Activated CD8-positive, alpha-beta T cell treated with anti-CD3 and anti-CD28 coated beads, Interleukin-2, amount 10 ng/mL, durations not matched to agents 7 days and 5 days (primary cell): ENCODE measurements at regions of chr3 and their contacts with region 1.

Region 1: DNA sequence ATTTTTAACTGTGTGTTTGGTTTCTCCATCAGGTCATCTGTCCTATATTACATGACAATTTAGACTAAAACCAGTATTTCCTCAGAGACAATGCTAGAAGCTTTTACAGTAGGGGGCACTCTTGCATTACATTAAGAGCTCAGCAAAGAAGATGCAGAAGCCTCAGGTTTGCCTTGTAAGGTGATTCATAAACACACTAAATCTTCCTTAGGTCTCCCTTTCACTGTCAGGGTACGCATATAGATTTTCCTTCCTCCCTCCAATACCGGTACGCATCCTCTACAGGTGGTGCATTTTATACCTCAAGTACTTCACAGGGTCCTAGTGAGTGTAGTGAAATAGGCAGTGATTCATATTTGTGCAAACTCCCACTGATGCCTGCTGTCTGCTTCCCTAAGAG is 46.5 kb downstream of the CD86 start:
- DNase-seq: peak; percentile 50
- ATAC-seq: peak; percentile 76
- H3K4me3 Mint-ChIP-seq: no peak overlapping the region
- H3K27ac Mint-ChIP-seq: no peak overlapping the region
- H3K4me1 Mint-ChIP-seq: peaks cover 22% of the 10 kb centered on the region
- H3K27me3 Mint-ChIP-seq: no peaks in the 10 kb centered on the region

Region 2: GRCh38 chr3:122111974-122112373 is 10.3 kb after region 1 on chr3:
- CTCF ChIA-PET with region 1: interaction called, 22 read pairs
- POLR2A ChIA-PET with region 1: no interaction called
- DNase-seq: no peak
- ATAC-seq: no peak
- H3K4me3 Mint-ChIP-seq: no peak overlapping the region
- H3K27ac Mint-ChIP-seq: no peak overlapping the region
- H3K4me1 Mint-ChIP-seq: no peaks in the 10 kb centered on the region
- H3K27me3 Mint-ChIP-seq: peaks cover 13% of the 10 kb centered on the region

Region 3: DNA sequence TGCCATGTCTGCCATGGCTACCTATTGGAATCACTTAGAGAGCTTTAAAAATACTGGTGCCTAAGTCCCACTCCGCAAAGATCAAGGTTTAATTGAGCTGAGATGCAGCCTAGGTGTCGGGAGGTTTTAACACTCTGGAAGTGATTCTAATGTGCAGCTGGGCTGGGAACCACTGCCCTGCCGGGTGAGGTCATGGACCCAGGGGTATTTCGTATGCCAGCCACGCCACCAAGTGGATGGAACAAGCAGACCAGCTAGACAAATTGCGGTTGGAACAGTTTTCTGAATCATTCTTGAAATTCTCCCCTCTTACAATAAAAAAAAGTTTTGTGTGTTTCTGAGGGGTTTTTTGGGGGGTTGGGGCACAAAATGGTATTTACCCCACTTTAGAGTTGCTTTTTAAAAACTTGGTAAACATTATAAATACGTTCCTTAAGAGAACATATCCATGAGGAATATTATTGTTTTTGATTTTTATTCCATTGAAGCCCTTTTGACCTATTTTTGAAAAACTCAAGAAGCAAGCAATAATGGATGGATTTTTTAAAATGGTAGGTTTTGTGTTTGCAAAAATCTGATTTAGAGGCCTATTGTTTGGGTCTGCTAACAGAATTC is 157.2 kb after region 1 on chr3:
- CTCF ChIA-PET with region 1: interaction called, 40 read pairs
- POLR2A ChIA-PET with region 1: no interaction called
- DNase-seq: peak; percentile 63
- ATAC-seq: peak; percentile 90
- H3K4me3 Mint-ChIP-seq: no peak overlapping the region
- H3K27ac Mint-ChIP-seq: no peak overlapping the region
- H3K4me1 Mint-ChIP-seq: peaks cover 6% of the 10 kb centered on the region
- H3K27me3 Mint-ChIP-seq: peaks cover 23% of the 10 kb centered on the region

Region 4: DNA sequence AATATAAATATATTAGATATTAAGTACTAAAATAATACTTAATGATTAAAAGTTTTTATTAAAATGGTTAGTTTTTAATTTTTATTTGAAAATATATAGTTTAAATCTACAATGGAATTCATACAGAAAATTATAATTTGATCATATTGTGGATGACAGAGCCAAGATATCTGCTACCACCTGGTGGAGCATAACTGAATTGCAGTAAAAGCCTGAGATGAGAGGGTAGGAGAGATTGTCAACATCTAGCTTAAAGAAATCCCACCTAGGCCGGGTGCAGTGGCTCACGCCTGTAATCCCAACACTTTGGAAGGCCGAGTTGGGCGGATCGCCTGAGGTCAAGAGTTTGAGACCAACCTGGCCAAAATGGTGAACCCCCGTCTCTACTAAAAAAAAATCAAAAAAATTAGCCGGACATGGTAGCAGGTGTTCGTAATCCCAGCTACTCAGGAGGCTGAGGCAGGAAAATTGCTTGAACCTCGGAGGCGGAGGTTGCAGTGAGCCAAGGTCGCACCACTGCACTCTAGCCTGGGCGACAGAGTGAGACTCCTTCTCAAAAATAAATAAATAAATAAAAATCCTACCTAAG is 198.3 kb after region 1 on chr3:
- CTCF ChIA-PET with region 1: interaction called, 56 read pairs
- POLR2A ChIA-PET with region 1: no interaction called
- DNase-seq: peak; percentile 69
- ATAC-seq: no peak
- H3K4me3 Mint-ChIP-seq: no peak overlapping the region
- H3K27ac Mint-ChIP-seq: no peak overlapping the region
- H3K4me1 Mint-ChIP-seq: peaks cover 29% of the 10 kb centered on the region
- H3K27me3 Mint-ChIP-seq: no peaks in the 10 kb centered on the region

Region 5: GRCh38 chr3:122305818-122306621 is 204.4 kb after region 1 on chr3:
- CTCF ChIA-PET with region 1: interaction called, 22 read pairs
- POLR2A ChIA-PET with region 1: no interaction called
- DNase-seq: no peak
- ATAC-seq: no peak
- H3K4me3 Mint-ChIP-seq: no peak overlapping the region
- H3K27ac Mint-ChIP-seq: no peak overlapping the region
- H3K4me1 Mint-ChIP-seq: peaks cover 3% of the 10 kb centered on the region
- H3K27me3 Mint-ChIP-seq: peaks cover 16% of the 10 kb centered on the region

Region 6: GRCh38 chr3:122356415-122356814 is 254.8 kb after region 1 on chr3:
- CTCF ChIA-PET with region 1: interaction called, 11 read pairs
- POLR2A ChIA-PET with region 1: no interaction called
- DNase-seq: peak; percentile 50
- ATAC-seq: no peak
- H3K4me3 Mint-ChIP-seq: no peak overlapping the region
- H3K27ac Mint-ChIP-seq: no peak overlapping the region
- H3K4me1 Mint-ChIP-seq: peaks cover 9% of the 10 kb centered on the region
- H3K27me3 Mint-ChIP-seq: no peaks in the 10 kb centered on the region

Region 7: GRCh38 chr3:122572940-122573412 is 471.3 kb after region 1 on chr3:
- CTCF ChIA-PET with region 1: no interaction called
- POLR2A ChIA-PET with region 1: no interaction called
- DNase-seq: peak; percentile 39
- ATAC-seq: no peak
- H3K4me3 Mint-ChIP-seq: no peak overlapping the region
- H3K27ac Mint-ChIP-seq: peak overlapping the region; percentile 77
- H3K4me1 Mint-ChIP-seq: peaks cover 60% of the 10 kb centered on the region
- H3K27me3 Mint-ChIP-seq: no peaks in the 10 kb centered on the region